ENCODE measurements at regions of chr11 and their contacts with region 1.

Region 1: GRCh38 chr11:67288452-67289225 is 464 bp upstream of the ANKRD13D start:
- DNase-seq: peak; percentile 94
- H3K4me3 Mint-ChIP-seq: peak overlapping the region; percentile 74
- H3K27ac Mint-ChIP-seq: peak overlapping the region; percentile 99
- H3K4me1 Mint-ChIP-seq: peaks cover 76% of the 10 kb centered on the region
- H3K27me3 Mint-ChIP-seq: no peaks in the 10 kb centered on the region

Region 2: DNA sequence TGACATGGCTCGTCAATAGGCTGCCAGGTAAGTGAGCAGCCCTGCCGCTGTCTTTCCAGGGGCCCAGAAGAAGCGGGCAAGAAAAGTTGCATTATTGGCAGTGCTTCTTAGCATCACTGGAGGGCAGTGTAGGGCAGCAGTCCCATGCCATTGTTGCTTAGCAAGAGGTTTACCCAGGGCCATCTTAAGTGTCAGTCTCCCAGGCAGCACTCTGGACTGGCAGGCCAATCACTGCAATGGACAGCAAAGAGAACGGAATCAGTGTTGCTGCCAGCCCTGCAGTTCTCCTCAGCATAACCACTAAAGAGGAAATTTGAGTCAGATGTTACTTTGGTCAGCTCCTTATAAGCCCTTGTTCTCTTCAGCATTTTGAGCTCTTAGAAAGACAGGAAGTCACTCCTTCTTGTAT is 35.8 kb before region 1 on chr11:
- CTCF ChIA-PET with region 1: no interaction called
- POLR2A ChIA-PET with region 1: interaction called, 10 read pairs
- DNase-seq: peak; percentile 54
- H3K4me3 Mint-ChIP-seq: no peak overlapping the region
- H3K27ac Mint-ChIP-seq: peak overlapping the region; percentile 81
- H3K4me1 Mint-ChIP-seq: peaks cover 47% of the 10 kb centered on the region
- H3K27me3 Mint-ChIP-seq: no peaks in the 10 kb centered on the region

Region 3: GRCh38 chr11:67277231-67277961 is 11.2 kb before region 1 on chr11:
- CTCF ChIA-PET with region 1: interaction called, 32 read pairs
- POLR2A ChIA-PET with region 1: interaction called, 494 read pairs
- DNase-seq: peak; percentile 94
- H3K4me3 Mint-ChIP-seq: peak overlapping the region; percentile 77
- H3K27ac Mint-ChIP-seq: peak overlapping the region; percentile 93
- H3K4me1 Mint-ChIP-seq: peaks cover 80% of the 10 kb centered on the region
- H3K27me3 Mint-ChIP-seq: no peaks in the 10 kb centered on the region

Region 4: DNA sequence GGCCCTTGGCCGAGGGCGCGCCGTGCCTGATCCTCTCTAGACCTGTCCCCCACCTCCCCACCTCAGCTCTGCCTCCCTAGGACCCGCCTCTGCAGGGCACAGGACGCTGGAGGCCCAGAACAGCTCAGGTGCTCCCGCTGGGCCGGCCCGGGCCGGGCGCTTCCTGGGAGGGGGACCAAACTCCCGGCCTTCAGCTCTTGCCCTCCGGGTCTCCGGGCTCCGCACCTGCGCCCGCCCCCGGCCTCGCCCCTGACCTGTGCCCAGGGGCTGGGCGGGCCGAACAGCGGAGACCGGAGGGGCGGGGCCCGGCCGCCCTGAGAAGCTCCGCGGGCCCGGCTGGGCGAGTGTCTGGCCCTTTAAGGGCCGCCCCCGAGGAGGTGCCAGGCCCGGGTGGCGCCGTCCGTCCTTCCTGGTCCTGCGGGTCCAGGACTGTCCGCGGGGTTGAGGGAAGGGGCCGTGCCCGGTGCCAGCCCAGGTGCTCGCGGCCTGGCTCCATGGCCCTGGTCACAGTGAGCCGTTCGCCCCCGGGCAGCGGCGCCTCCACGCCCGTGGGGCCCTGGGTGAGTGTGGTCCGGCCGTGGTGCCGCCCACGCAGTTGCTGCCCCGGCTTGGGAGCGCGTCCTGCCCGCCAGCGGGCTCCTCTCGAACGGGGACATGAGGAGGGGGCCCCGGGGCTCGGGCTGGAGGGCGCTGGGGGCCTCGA is 14.6 kb after region 1 on chr11 and contains the start of gene SSH3:
- CTCF ChIA-PET with region 1: interaction called, 5 read pairs
- POLR2A ChIA-PET with region 1: interaction called, 96 read pairs
- DNase-seq: peak; percentile 60
- H3K4me3 Mint-ChIP-seq: peak within 1 kb of the TSS; percentile 68
- H3K27ac Mint-ChIP-seq: no peak within 1 kb of the TSS
- H3K4me1 Mint-ChIP-seq: peaks cover 18% of the 10 kb centered on the region
- H3K27me3 Mint-ChIP-seq: no peaks in the 10 kb centered on the region
- total RNA-seq, gene SSH3: 15.4 to 19.0 TPM

Region 5: DNA sequence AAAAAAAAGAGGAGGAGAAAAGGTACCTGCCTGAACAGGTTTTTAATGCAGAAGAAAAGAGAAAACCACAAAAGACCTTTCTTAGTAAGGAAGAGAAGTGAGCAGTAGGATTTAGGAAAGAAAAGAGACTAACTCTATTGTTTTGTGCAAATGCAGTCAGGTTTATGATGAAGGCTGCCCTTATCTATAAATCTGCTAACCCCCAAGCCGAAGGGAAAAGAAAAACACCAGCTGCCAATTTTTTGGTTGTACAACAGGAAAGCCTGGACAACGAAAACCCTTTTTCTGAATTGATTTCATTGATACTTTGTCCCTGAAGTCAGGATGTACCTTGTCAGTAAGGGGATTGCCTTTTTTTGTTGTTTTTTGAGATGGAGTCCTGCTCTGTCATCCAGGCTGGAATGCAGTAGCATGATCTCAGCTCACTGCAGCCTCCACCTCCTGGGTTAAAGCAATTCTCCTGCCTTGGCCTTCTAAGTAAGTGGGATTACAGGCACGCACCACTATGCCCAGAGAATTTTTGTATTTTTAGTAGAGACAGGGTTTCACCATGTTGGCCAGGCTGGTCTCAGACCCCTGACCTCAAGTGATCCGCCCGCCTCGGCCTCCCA is 43.5 kb after region 1 on chr11:
- CTCF ChIA-PET with region 1: no interaction called
- POLR2A ChIA-PET with region 1: no interaction called
- DNase-seq: no peak
- H3K4me3 Mint-ChIP-seq: no peak overlapping the region
- H3K27ac Mint-ChIP-seq: no peak overlapping the region
- H3K4me1 Mint-ChIP-seq: no peaks in the 10 kb centered on the region
- H3K27me3 Mint-ChIP-seq: no peaks in the 10 kb centered on the region

Measured in activated CD4-positive, alpha-beta memory T cell treated with anti-CD3 and anti-CD28 coated beads, Interleukin-2, amount 10 ng/mL, durations not matched to agents 7 days and 5 days (primary cell).